ENCODE measurements at regions of chr16 and their contacts with region 1.

Region 1: GRCh38 chr16:30628627-30629540 is 18.7 kb upstream of the ZNF689 start:
- DNase-seq: peak; percentile 91
- ATAC-seq: peak; percentile 89

Region 2: GRCh38 chr16:30429678-30430427 is 199.0 kb before region 1 on chr16 and contains the start of gene DCTPP1:
- intact Hi-C with region 1: loop called (anchors 2 kb)
- DNase-seq: peak; percentile 96
- ATAC-seq: peak; percentile 99
- total RNA-seq, gene DCTPP1: 35.2 TPM

Region 3: GRCh38 chr16:30585400-30586189 is 43.3 kb before region 1 on chr16 and contains the start of gene ZNF785:
- intact Hi-C with region 1: loop called (anchors 2 kb)
- DNase-seq: peak; percentile 97
- ATAC-seq: peak; percentile 99
- total RNA-seq, gene ZNF785: 7.6 TPM

Region 4: GRCh38 chr16:30650369-30651123 is 21.7 kb after region 1 on chr16 and contains the start of gene PRR14:
- intact Hi-C with region 1: loop called (anchors 1 kb)
- DNase-seq: peak; percentile 100
- ATAC-seq: peak; percentile 94
- total RNA-seq, gene PRR14: 18.2 TPM

Region 5: DNA sequence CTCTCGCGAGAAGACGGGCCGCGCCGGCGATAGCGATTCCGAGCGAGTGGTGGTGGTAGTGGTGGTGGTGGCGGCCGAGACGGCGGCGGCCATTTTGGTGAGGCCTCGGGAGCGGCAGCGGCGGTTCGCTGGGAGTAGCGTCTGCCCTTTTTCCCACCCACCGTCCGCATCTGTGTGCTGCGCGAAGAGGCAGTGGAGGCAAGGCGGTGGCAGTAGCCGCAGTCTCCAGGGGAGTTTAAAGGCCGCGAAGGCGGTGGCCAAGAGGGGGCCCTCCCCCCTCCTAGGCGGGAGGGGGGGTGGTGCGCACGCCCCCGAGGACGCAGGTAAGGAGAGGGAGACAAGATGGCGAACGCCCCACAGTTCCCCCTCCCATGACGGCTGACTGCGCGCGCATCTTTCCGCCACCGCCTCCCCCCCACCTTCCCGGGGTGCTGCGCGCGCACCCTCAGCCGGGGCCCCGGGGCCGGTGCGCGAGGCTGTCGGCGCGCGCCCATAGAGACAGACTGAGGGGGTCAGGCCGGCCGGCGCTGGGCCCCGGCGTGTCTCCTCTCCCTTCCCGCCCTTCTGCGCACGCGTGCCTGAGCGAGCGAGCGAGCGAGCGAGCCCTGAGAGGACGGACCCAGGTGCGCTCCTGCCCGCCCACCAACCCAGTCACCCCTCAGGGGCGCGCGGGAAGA is 69.4 kb after region 1 on chr16:
- intact Hi-C with region 1: loop called (anchors 2 kb)
- DNase-seq: peak; percentile 96
- ATAC-seq: peak; percentile 91